GM13976 (cell line): ENCODE measurements at regions of chrX and their contacts with region 1.

Region 1: GRCh38 chrX:153554519-153555167 is 37.2 kb downstream of the ATP2B3 start:
- DNase-seq: peak; percentile 82
- CTCF ChIP-seq: peak; percentile 64

Region 2: GRCh38 chrX:153614818-153615217 is 60.2 kb after region 1 on chrX:
- in situ Hi-C with region 1: loop called (anchors 5 kb)
- DNase-seq: no peak
- CTCF ChIP-seq: no peak

Region 3: DNA sequence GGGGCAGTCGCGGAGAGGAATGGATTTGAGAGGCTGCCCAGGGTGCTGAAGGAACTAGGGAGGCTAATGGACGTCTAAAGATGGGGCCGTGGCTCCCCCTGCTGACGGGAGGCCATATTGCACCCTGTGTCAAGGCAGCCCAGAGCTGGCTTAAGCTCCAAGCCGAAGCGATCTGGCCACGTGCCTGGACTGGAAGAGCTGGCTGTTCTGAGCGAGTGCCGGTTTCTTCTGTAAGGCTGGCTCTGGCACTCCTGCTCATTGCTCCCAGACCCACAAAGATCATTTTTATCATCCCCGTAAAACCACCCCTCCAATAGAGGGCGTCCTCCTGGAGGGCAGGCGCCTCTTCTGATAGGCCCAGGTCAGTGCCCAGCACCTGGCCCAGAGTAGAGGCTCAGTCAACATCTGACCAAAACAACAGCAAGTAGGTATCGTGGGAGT is 113.3 kb after region 1 on chrX:
- in situ Hi-C with region 1: loop called (anchors 10 kb)
- DNase-seq: peak; percentile 82
- CTCF ChIP-seq: peak; percentile 75